A549 (cell line): ENCODE measurements at regions of chr16 and their contacts with region 1.

Region 1: DNA sequence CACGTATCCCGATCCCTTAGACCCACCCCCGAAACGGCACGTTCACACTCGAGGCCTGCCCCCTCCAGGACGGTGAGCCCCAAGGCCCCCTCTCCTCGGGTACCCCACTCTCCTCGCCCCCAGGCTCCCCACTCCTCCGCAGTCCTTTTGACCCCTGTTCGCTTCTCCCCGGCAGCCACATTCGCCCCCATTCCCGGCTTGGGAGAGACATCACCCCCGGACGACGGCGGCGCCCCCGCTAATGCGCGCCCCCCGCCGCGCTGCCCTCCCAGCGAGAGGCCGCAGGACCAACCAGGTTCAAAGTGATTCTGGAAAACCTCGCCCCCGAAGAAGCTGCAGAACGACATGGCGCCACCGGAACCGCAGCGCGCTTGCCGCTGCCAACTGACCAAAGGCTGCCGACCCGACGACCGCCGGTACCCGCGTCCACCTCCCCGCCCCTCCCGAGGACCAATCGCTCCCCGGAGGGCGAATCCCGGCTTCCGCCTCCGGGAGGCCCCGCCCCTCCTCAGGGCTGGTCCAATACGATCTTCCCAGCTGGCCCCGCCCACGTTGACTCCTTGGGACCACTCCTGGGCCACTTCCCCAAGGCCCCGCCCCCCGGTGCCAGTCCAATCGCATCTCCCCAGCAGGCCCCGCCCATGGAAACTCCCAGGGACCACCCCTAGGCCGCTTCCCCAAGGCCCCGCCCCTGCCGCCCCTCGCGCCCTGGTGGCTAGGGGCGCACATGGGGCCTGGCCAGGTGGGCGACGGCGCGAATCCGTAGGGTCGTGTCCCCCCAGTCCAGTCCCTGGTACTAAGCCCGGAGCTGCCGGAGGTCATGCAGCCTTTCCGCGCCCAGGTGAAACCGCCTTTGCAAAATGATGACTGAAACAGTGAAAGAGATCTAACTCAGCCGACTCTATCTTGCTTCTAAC is at the start of gene MSRB1:
- DNase-seq: peak; percentile 97 to 98
- ATAC-seq: peak; percentile 84 to 93
- H3K4me3 ChIP-seq: peak within 1 kb of the TSS; percentile 84
- H3K27ac ChIP-seq: peak within 1 kb of the TSS; percentile 79 to 92
- H3K4me1 ChIP-seq: peaks cover 19% of the 10 kb centered on the region
- CTCF ChIP-seq: no peak
- EP300 ChIP-seq: no peak
- POLR2A ChIP-seq: peak; percentile 90
- RAD21 ChIP-seq: no peak
- polyA plus RNA-seq, gene MSRB1: 27.7 and 34.4 TPM in 2 replicates

Region 2: GRCh38 chr16:1923299-1924034 is 19.6 kb before region 1 on chr16:
- CTCF ChIA-PET with region 1: interaction called, 63 read pairs
- POLR2A ChIA-PET with region 1: interaction called, 3 read pairs
- DNase-seq: peak; percentile 72 to 88
- ATAC-seq: peak; percentile 75 to 90
- H3K4me3 ChIP-seq: no peak overlapping the region
- H3K27ac ChIP-seq: peak overlapping the region; percentile 76 to 88
- H3K4me1 ChIP-seq: peaks cover 48% of the 10 kb centered on the region
- CTCF ChIP-seq: peak; percentile 45
- EP300 ChIP-seq: no peak
- POLR2A ChIP-seq: no peak
- RAD21 ChIP-seq: peak; percentile 14 to 26; a peak in 1 of 5 replicates